ENCODE measurements at regions of chr3 and their contacts with region 1.

Region 1: DNA sequence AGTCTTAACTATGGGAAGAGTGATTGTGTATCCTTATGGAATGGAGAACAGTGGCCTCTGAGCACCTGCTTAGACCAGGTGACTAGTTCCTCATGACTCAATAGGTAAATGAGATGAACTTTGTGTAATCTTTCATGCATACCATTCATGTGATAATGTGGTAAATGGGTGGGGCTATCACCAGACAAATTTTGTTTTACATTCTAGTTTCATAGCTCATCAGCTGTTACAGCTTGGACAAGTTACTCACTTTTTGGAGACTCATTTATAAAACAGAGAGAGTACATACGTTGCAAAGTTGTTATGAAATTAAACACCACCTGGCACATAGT is 103.7 kb upstream of the TGFBR2 start:
- DNase-seq: peak; percentile 86
- ATAC-seq: peak; percentile 83
- H3K4me3 ChIP-seq: no peak overlapping the region
- H3K4me3 Mint-ChIP-seq: peak overlapping the region; percentile 77
- H3K27ac ChIP-seq: peak overlapping the region; percentile 70 to 77
- H3K27ac Mint-ChIP-seq: peak overlapping the region; percentile 93
- H3K4me1 ChIP-seq: peaks cover 37 to 40% of the 10 kb centered on the region in 2 donors
- H3K4me1 Mint-ChIP-seq: peaks cover 59% of the 10 kb centered on the region
- H3K27me3 ChIP-seq: no peaks in the 10 kb centered on the region
- H3K27me3 Mint-ChIP-seq: no peaks in the 10 kb centered on the region
- CTCF ChIP-seq: no peak

Region 2: GRCh38 chr3:30269751-30270445 is 232.8 kb before region 1 on chr3:
- CTCF ChIA-PET with region 1: no interaction called
- POLR2A ChIA-PET with region 1: no interaction called
- intact Hi-C with region 1: loop called (anchors 5 kb)
- DNase-seq: peak; percentile 77
- ATAC-seq: peak; percentile 96
- H3K4me3 ChIP-seq: peak overlapping the region in 1 of 5 experiments; percentile 30
- H3K4me3 Mint-ChIP-seq: peak overlapping the region; percentile 57
- H3K27ac ChIP-seq: peak overlapping the region; percentile 8 to 25
- H3K27ac Mint-ChIP-seq: peak overlapping the region; percentile 0
- H3K4me1 ChIP-seq: peaks cover 10 to 12% of the 10 kb centered on the region in 2 donors
- H3K4me1 Mint-ChIP-seq: peaks cover 10% of the 10 kb centered on the region
- H3K27me3 ChIP-seq: no peaks in the 10 kb centered on the region
- H3K27me3 Mint-ChIP-seq: no peaks in the 10 kb centered on the region
- CTCF ChIP-seq: no peak

Measured in B cell (primary cell).